Right ventricle myocardium superior (tissue), 1 donor: ENCODE measurements at regions of chr4 and their contacts with region 1.

Region 1: GRCh38 chr4:125432104-125432503 is 117.3 kb downstream of the FAT4 start:
- DNase-seq: no peak
- ATAC-seq: peak; percentile 56

Region 2: GRCh38 chr4:125123570-125124109 is 308.5 kb before region 1 on chr4:
- intact Hi-C with region 1: no loop called
- DNase-seq: no peak
- ATAC-seq: no peak

Region 3: DNA sequence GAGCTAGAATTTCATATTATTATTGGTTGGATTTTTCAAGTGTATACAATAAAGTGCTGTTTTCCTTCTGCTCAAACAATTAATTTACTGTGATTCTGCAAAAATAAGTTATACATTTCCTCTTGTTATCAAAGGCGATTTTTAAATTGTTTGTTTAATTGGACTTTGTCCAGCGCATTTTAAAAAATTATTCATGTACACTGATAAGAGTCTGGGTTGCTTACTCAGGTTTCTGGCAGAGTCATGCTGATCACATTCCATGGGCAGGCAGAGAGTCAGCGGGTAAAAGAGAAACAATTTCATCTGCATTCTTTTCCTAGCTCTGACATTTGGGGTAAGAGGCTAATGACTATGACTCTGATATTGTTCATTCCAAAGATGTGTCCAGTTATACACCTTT is 108.5 kb before region 1 on chr4:
- intact Hi-C with region 1: loop called (anchors 5 kb)
- DNase-seq: no peak
- ATAC-seq: peak; percentile 79

Region 4: GRCh38 chr4:125741825-125742452 is 309.8 kb after region 1 on chr4:
- intact Hi-C with region 1: loop called (anchors 10 kb)
- DNase-seq: no peak
- ATAC-seq: peak; percentile 55